Activated CD4-positive, alpha-beta memory T cell treated with anti-CD3 and anti-CD28 coated beads for 36 hours (primary cell): ENCODE measurements at regions of chr6 and their contacts with region 1.

Region 1: GRCh38 chr6:100228831-100229641 is 235.0 kb upstream of the MCHR2 start:
- DNase-seq: peak; percentile 78
- H3K4me3 Mint-ChIP-seq: peak overlapping the region; percentile 66
- H3K27ac Mint-ChIP-seq: peak overlapping the region; percentile 86
- H3K4me1 Mint-ChIP-seq: peaks cover 26% of the 10 kb centered on the region
- H3K27me3 Mint-ChIP-seq: peaks cover 25% of the 10 kb centered on the region

Region 2: DNA sequence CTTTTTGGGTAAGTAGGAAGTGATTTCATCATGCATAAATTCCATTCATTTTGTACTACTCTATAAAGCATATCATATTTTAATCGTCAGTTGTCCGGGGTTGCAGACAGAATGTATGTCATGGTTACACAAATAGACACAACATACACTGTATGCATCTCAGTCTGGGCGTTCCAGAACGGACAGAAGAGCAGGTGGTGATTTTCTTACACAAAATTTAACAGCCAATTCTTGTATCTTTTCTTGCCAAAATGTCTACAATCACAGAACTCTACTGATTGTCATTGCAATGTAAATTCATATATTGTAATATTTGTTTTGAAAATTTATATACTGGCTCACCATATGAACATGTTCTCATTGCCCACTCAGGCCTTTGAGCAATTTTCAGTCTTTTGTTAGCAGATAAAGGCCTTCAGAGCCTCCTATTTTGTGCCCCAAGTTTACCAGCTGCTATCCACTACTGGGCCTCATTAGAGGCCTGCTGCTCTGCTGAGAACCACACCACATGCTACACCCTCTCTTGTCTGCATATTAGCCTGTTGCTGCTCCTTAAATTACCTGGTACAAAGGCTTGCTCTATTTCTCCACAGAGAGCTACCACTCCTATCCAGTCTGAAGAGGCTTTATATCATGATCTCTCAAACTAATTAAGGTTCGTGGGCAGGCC is 560.9 kb before region 1 on chr6:
- CTCF ChIA-PET with region 1: no interaction called
- POLR2A ChIA-PET with region 1: no interaction called
- intact Hi-C with region 1: no loop called
- DNase-seq: no peak
- H3K4me3 Mint-ChIP-seq: no peak overlapping the region
- H3K27ac Mint-ChIP-seq: no peak overlapping the region
- H3K4me1 Mint-ChIP-seq: no peaks in the 10 kb centered on the region
- H3K27me3 Mint-ChIP-seq: peaks cover 1% of the 10 kb centered on the region

Region 3: DNA sequence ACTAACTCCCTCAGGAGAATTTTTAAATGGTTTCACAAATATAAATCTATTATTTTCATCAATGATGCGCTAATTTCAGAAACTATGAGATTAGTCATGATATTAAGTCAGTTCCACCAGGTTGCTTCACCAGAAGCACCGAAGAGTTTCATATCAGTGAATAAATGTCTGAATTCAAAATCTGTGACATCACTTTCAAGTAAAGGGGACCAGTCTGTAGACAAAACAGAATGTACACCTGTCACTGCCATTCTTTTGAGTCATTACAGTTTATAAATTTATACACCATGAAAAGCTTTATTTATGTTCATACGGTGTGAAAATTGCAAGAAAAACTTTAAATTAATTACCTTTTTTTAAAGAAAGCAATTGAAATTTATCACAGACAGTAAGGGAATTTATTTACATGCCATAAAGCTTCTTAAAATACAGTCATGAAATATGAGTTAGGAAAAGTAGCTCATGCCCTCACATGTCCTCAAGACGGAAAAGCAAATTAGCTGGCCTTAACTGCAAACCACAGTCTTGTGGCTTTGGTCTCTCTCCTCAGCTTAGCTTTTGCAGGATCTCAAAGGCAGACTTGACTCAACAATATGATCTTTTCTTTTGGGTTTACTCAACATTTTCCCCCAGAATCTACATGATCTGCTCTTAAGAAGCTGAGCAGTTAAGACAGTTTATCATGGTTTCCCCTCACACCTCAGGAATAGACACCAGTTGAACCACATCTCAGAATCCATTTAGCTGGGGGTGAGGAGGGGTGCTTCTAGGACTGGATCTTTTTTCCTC is 57.3 kb before region 1 on chr6:
- CTCF ChIA-PET with region 1: no interaction called
- POLR2A ChIA-PET with region 1: no interaction called
- intact Hi-C with region 1: loop called (anchors 1 kb)
- DNase-seq: peak; percentile 14
- H3K4me3 Mint-ChIP-seq: no peak overlapping the region
- H3K27ac Mint-ChIP-seq: no peak overlapping the region
- H3K4me1 Mint-ChIP-seq: peaks cover 4% of the 10 kb centered on the region
- H3K27me3 Mint-ChIP-seq: peaks cover 1% of the 10 kb centered on the region

Region 4: DNA sequence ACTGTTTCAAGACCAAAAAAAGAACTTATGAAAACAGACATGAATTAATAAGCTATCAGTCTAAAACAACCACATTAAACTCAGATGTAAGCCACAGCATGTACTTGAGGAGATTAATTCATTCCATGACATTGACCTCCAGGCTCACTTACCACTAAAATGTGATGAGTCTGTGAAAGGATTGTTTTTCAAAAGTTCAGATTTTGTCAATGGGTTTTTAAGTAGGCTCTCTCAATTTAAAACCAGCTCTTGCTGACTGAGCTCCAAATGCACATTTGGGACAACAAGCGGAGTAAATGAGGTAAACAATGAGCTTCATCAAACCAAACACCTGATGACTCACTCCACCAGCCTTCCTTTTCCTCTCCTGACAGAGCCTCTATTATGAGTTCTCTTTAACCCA is 38.7 kb after region 1 on chr6:
- CTCF ChIA-PET with region 1: no interaction called
- POLR2A ChIA-PET with region 1: no interaction called
- intact Hi-C with region 1: no loop called
- DNase-seq: no peak
- H3K4me3 Mint-ChIP-seq: no peak overlapping the region
- H3K27ac Mint-ChIP-seq: no peak overlapping the region
- H3K4me1 Mint-ChIP-seq: no peaks in the 10 kb centered on the region
- H3K27me3 Mint-ChIP-seq: no peaks in the 10 kb centered on the region

Region 5: GRCh38 chr6:101281282-101281681 is 1052.2 kb after region 1 on chr6:
- CTCF ChIA-PET with region 1: no interaction called
- POLR2A ChIA-PET with region 1: no interaction called
- intact Hi-C with region 1: no loop called
- DNase-seq: no peak
- H3K4me3 Mint-ChIP-seq: no peak overlapping the region
- H3K27ac Mint-ChIP-seq: no peak overlapping the region
- H3K4me1 Mint-ChIP-seq: no peaks in the 10 kb centered on the region
- H3K27me3 Mint-ChIP-seq: no peaks in the 10 kb centered on the region